Sigmoid colon (tissue), 7 donors: ENCODE measurements at regions of chr7 and their contacts with region 1.

Region 1: DNA sequence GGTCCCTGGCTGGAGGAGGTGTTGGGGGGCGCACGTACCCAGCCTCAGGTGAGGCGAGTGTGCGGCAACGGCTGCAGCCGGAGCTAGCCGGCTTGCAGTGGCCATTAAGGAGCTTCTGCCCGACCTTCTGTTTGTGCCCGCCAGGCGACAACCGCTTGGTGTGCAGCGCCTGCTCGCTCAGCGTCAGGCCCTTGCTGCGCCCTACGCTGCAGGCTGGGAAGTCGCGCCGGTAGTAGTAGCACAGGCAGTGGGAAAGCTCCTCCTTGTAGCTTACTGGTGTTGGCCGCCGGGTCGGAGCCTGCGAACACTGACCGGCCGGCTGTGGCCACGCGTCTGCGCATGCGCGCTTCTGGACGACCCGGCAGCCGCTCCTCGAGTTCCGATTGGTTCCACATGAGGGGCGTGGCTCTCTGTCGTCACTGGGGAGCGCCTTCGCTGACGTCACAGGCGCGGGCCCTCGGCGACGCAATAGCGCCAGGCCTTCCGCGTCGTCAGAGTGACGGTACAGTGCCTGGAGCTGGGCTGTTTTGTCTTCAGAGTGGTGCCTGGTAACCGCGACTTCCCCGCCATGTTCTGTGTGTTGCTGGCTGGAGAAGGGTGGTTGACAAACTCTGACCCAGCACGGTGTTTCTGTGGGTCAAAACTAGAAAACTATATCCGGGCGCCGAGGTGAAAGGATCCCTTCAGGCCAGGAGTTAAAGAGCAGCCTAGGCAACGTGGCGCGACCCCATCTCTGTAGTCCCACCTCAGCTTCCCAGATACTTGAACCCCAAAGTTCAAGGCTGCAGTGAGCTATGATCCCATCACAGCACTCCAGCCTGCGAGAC is 76.3 kb upstream of the TMEM248 start:
- DNase-seq: peak; percentile 99
- H3K4me3 ChIP-seq: peak overlapping the region; percentile 51 to 94 (median 72)
- H3K27ac ChIP-seq: peak overlapping the region; percentile 81 to 96 (median 93)
- H3K4me1 ChIP-seq: peaks cover 0 to 19% (median 14%) of the 10 kb centered on the region in 4 donors
- H3K27me3 ChIP-seq: no peaks in the 10 kb centered on the region
- CTCF ChIP-seq: peak; percentile 38 to 61 (median 44)
- EP300 ChIP-seq: peak in 2 of 4 donors; percentile 70 to 75
- POLR2A ChIP-seq: peak; percentile 94 to 95

Region 2: DNA sequence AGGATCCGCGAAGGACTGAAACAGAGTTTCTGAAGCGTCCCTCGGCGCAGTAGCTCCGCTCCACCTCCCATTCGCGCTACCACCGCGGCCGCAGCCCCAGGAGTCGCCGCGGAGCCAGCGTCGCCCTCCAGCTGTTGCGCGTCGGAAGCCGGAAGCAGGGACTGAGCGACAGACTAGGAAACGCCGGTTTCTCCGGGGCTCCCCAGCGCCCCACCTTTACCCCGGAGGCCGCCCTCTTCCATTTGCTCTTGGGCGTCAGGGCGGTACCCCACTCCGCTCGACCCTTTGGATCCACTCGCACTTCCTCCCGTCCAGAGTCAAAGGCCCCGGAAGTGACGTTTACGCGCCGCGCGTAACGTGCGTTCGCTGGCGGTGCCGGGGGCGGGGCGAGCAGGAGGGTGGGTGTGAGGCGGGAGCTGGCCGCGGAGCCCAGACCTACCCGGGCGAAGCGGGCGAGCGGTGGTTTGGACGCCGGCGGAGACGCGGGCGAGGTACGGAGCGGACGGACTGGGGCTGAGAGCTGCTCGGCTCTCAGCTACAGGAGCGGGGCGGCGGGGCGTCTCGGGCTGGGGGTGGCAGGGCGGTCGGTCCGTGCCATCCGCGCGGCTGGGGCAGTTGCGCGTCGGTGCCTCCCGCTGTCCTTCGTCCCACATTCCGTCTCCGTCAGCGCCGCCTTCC is 104.3 kb before region 1 on chr7 and contains the start of gene RABGEF1:
- intact Hi-C with region 1: loop called (anchors 2 kb)
- DNase-seq: peak; percentile 99
- H3K4me3 ChIP-seq: peak within 1 kb of the TSS; percentile 72 to 98 (median 90)
- H3K27ac ChIP-seq: peak within 1 kb of the TSS; percentile 92 to 100 (median 97)
- H3K4me1 ChIP-seq: peaks cover 0 to 36% (median 23%) of the 10 kb centered on the region in 4 donors
- H3K27me3 ChIP-seq: no peaks in the 10 kb centered on the region
- CTCF ChIP-seq: no peak
- EP300 ChIP-seq: peak in 2 of 4 donors; percentile 14 to 58
- POLR2A ChIP-seq: peak; percentile 88 to 93
- total RNA-seq, gene RABGEF1: 36.4 to 47.2 (median 41.3) TPM

Region 3: DNA sequence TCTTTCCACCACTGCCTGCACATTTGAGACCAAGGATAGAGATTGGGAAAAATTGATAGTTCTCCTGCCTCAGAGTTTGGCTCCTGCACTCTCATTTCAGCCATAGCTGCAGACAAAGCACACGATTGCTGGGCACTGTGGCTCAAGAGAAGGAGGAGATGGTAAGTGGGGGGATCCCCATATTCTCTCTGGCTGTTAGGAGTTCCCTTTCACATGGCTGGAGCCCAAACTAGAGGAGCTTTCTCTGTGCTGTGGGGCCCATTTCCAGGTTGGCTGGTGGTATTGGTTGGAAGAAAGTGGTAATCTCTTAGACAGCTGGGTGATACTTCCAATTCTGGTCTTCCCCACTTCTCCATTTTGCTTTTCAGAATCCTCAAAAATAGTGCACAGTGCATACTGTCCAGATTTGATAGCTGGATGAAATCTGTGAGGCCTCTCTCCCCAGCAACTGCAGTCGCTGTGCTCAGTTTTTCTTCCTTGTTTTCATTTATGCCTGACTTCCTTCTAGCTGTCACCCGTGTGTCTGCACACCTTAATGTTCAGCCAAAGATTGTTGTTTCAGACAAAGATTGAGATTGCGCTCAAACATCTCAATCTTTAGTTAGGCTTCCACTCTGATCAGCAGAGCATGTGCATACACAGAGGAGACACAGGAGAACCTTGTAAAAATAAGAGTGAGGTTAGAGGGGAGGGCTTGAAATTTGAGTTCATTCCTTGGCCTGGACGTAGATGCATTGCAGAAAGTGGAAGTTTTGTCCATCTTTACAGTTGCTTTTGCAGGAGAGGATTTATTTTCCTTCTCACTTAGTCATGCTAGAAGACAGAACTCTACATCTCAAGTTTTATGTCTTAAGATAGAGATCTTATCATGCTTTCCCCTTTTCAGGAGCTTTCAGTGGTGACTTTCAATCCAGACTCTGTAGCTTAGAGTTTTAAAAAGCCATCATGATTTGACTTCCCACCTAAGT is 75.6 kb before region 1 on chr7:
- intact Hi-C with region 1: no loop called
- DNase-seq: no peak
- H3K4me3 ChIP-seq: no peak overlapping the region
- H3K27ac ChIP-seq: peak overlapping the region in 1 of 4 donors; percentile 27
- H3K4me1 ChIP-seq: peaks cover 0 to 31% (median 15%) of the 10 kb centered on the region in 4 donors
- H3K27me3 ChIP-seq: no peaks in the 10 kb centered on the region
- CTCF ChIP-seq: no peak
- EP300 ChIP-seq: no peak
- POLR2A ChIP-seq: no peak

Region 4: GRCh38 chr7:66920769-66921395 is 76.1 kb after region 1 on chr7 and contains the start of gene TMEM248:
- intact Hi-C with region 1: loop called (anchors 5 kb)
- DNase-seq: peak; percentile 94
- H3K4me3 ChIP-seq: peak within 1 kb of the TSS; percentile 73 to 99 (median 94)
- H3K27ac ChIP-seq: peak within 1 kb of the TSS; percentile 77 to 90 (median 82)
- H3K4me1 ChIP-seq: peaks cover 0 to 39% (median 32%) of the 10 kb centered on the region in 4 donors
- H3K27me3 ChIP-seq: no peaks in the 10 kb centered on the region
- CTCF ChIP-seq: no peak
- EP300 ChIP-seq: peak in 2 of 4 donors; percentile 37 to 39
- POLR2A ChIP-seq: no peak
- total RNA-seq, gene TMEM248: 66.2 to 93.8 (median 81.2) TPM

Region 5: GRCh38 chr7:67302113-67303039 is 457.6 kb after region 1 on chr7:
- intact Hi-C with region 1: loop called (anchors 5 kb)
- DNase-seq: peak; percentile 100
- H3K4me3 ChIP-seq: peak overlapping the region; percentile 72 to 78 (median 73)
- H3K27ac ChIP-seq: peak overlapping the region; percentile 93 to 96 (median 95)
- H3K4me1 ChIP-seq: peaks cover 0 to 13% (median 9%) of the 10 kb centered on the region in 4 donors
- H3K27me3 ChIP-seq: no peaks in the 10 kb centered on the region
- CTCF ChIP-seq: peak; percentile 43 to 58 (median 54)
- EP300 ChIP-seq: no peak
- POLR2A ChIP-seq: peak; percentile 26 to 43